Activated T-helper 2 cell treated with anti-CD3 and anti-CD28 coated beads, Interferon-gamma antibody, Interleukin-2, Interleukin-4, amounts not matched to agents 10 μg/mL and 5 μg/mL and 100 μg/mL, durations not matched to agents 14 hours and 24 hours and 36 hours (primary cell): ENCODE measurements at regions of chr2 and their contacts with region 1.

Region 1: DNA sequence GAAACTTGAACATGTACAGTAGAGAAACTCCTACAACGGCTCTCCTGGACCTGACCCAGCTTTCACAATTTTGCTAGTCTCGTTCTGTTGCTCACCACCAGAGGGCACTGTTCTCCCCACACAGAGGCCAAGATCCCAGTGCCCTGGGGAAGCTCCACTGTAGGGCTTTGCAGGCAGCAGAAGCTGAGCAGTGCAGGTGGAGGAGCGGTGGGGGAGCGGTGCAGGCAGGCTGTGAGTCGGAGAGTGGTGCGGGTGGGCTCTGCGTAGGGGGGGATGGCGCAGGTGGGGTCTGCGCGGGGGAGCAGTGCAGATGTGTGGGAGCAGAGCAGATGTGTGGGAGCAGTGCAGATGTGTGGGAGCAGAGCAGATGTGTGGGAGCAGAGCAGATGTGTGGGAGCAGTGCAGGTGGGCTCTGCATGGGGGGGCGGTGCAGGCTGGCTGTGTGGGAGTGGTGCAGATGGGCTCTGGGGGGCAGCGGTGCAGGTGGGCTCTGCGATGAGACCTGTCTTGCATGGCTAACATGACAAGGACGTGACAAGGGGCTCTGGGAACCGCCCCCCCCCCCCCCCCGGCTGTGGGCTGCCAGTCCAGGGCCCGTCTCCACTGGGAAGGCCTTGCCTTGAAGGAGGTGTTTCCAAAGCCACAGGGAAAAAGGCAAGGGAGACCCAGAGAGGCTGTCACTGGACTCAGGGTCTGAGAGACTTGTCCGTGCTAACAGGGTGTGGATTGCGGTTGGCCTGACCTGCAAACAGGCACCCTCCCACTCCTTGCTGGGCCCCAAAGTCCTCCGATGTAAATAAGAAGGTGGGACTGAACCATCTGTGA is 7.3 kb downstream of the CYS1 start:
- DNase-seq: peak; percentile 72
- H3K4me3 Mint-ChIP-seq: no peak overlapping the region
- H3K27ac Mint-ChIP-seq: no peak overlapping the region
- H3K4me1 Mint-ChIP-seq: peaks cover 12% of the 10 kb centered on the region
- H3K27me3 Mint-ChIP-seq: peaks cover 44% of the 10 kb centered on the region

Region 2: GRCh38 chr2:9967053-9967775 is 105.7 kb before region 1 on chr2:
- intact Hi-C with region 1: no loop called
- DNase-seq: no peak
- H3K4me3 Mint-ChIP-seq: no peak overlapping the region
- H3K27ac Mint-ChIP-seq: no peak overlapping the region
- H3K4me1 Mint-ChIP-seq: peaks cover 23% of the 10 kb centered on the region
- H3K27me3 Mint-ChIP-seq: peaks cover 1% of the 10 kb centered on the region

Region 3: DNA sequence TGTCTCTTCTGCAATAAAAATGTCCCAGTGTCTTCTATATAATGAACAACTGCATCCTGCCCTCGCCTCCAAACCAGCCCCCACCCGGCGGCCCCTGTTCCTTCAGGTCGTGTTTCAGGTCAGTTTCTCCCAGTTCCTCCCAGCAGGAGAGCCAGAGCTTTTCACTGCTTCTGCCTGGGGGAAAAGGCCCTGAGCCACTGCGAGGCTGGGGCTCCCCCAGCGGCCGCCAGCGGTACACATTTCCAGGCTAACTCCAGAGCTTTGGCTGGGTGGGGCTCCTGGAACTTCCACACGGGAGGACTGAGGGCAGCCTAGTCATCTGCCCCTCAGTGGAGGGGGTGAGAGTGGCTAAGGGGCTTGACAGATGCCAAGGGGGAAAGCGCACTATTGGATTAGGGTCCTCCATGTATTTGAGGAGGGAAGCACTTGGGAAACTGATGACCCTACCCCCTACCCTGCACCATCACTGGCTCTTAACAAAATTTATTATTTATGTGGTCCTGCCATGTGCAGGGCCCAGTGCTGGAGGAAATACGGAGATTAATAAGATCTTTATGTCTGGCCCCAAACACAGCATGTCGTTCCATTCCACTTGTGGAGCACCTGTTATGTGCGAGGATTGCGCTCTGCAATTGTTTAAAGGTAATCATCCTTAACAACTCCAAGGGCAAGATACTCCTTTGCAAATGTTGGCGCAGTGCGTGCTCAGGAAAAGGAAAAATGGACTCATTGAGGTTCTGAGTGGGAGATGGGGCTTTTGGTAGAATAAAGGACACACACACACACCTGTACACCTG is 24.7 kb after region 1 on chr2:
- intact Hi-C with region 1: loop called (anchors 1 kb)
- DNase-seq: no peak
- H3K4me3 Mint-ChIP-seq: no peak overlapping the region
- H3K27ac Mint-ChIP-seq: no peak overlapping the region
- H3K4me1 Mint-ChIP-seq: peaks cover 4% of the 10 kb centered on the region
- H3K27me3 Mint-ChIP-seq: peaks cover 28% of the 10 kb centered on the region

Region 4: GRCh38 chr2:10832203-10832936 is 759.5 kb after region 1 on chr2:
- intact Hi-C with region 1: no loop called
- DNase-seq: peak; percentile 73
- H3K4me3 Mint-ChIP-seq: no peak overlapping the region
- H3K27ac Mint-ChIP-seq: no peak overlapping the region
- H3K4me1 Mint-ChIP-seq: peaks cover 2% of the 10 kb centered on the region
- H3K27me3 Mint-ChIP-seq: peaks cover 28% of the 10 kb centered on the region